Colonic mucosa (tissue), 4 donors: ENCODE measurements at regions of chr12 and their contacts with region 1.

Region 1: DNA sequence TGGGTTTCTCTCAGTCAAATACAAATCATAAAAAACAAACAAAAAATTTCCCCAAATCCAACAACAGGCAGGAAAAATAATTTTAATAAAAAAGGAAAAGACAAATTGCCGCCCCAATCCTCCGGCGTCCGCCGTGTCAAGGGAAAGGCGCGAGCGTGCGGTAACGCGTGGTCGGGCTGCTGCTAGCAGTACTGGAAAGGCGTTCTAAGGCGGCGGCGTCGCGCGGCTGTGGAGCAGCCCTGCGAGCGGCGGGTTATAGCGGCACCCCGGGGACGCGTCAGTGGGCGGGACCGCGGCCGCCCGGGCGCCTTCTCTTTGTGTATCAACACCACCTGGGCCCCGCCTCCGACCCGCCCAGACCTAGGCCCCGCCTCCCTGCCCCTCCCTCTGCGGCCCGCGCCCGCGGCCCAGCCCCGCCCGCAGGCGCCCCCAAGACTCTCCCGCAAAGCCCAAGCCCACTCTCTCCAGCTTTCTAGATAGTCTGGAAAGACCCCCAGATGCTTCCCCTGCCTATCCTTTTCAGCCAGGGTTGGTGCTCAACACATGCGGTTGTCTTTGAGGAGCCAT is at the start of gene SLC38A2:
- DNase-seq: peak; percentile 99
- H3K4me3 ChIP-seq: peak within 1 kb of the TSS; percentile 54
- H3K27ac ChIP-seq: peak within 1 kb of the TSS; percentile 97
- H3K4me1 ChIP-seq: peaks cover 20% of the 10 kb centered on the region
- H3K27me3 ChIP-seq: no peaks in the 10 kb centered on the region
- CTCF ChIP-seq: no peak
- total RNA-seq, gene SLC38A2: 98.5 to 158 TPM

Region 2: GRCh38 chr12:46473634-46474329 is 101.2 kb after region 1 on chr12:
- intact Hi-C with region 1: loop called (anchors 10 kb)
- DNase-seq: peak; percentile 81
- H3K4me3 ChIP-seq: no peak overlapping the region
- H3K27ac ChIP-seq: peak overlapping the region; percentile 80
- H3K4me1 ChIP-seq: peaks cover 4% of the 10 kb centered on the region
- H3K27me3 ChIP-seq: no peaks in the 10 kb centered on the region
- CTCF ChIP-seq: no peak